ENCODE measurements at regions of chr2 and their contacts with region 1.

Region 1: GRCh38 chr2:187532348-187533120 is 21.7 kb downstream of the TFPI start:
- DNase-seq: no peak
- H3K4me3 ChIP-seq: no peak overlapping the region
- H3K27ac ChIP-seq: no peak overlapping the region
- H3K4me1 ChIP-seq: no peaks in the 10 kb centered on the region
- H3K27me3 ChIP-seq: no peaks in the 10 kb centered on the region

Region 2: DNA sequence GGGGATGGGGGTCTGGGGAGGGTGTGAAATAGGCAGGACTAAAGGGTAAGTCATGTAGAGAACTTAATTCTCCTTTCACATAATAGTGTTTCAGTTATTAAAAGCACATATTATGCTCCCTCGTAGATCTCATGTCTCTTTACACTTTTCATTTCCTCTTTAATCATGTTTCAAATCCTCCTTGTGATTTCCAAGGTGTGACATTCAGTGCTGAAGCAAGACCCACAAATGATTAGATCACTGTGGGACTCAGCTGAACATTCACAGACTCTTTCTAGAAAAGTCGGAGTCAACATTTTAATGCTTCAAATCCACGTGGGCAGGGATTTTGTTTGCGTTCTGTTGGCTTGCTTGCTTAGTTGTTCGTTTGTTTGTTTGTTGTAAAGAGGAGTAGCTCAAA is 49.7 kb before region 1 on chr2:
- CTCF ChIA-PET with region 1: no interaction called
- POLR2A ChIA-PET with region 1: no interaction called
- DNase-seq: no peak
- H3K4me3 ChIP-seq: no peak overlapping the region
- H3K27ac ChIP-seq: no peak overlapping the region
- H3K4me1 ChIP-seq: no peaks in the 10 kb centered on the region
- H3K27me3 ChIP-seq: no peaks in the 10 kb centered on the region

Region 3: DNA sequence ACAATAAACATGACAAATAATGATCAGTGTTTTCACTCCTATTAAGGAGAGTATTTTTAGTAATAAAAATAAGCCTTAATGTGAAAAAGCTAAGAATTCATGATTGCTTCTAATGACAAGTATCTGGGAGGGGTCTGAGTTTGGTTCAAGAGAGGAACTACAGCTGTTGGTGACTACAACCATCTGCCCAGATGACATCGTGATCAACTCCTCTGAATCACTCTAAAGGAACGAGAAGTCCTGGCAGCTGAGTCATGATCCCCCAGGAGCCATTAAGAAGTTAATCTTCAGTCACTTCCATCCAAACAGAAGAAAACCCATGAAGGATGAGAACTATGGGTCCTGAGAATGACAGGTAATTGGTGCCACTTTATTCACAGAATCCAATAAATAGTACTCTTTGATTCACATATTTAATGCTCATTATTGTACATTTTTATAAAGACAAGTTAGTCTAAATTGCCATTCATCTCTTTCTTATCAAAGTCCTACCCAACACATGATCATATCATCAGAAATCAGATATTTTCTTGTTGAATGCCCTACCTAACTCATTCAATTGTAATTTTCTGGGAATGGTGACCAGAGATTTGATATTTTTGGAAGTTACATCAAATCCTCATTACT is 14.9 kb after region 1 on chr2:
- CTCF ChIA-PET with region 1: interaction called, 10 read pairs
- POLR2A ChIA-PET with region 1: no interaction called
- DNase-seq: peak; percentile 65 to 94 (median 92)
- H3K4me3 ChIP-seq: no peak overlapping the region
- H3K27ac ChIP-seq: peak overlapping the region; percentile 47 to 54
- H3K4me1 ChIP-seq: peaks cover 0 to 54% (median 12%) of the 10 kb centered on the region in 4 experiments
- H3K27me3 ChIP-seq: no peaks in the 10 kb centered on the region

Measured in common myeloid progenitor, CD34-positive (primary cell).